Activated B cell treated with CpG ODN at 0.5 μM for 24 hours (primary cell): ENCODE measurements at regions of chr9 and their contacts with region 1.

Region 1: GRCh38 chr9:2144619-2145018 is 129.5 kb downstream of the SMARCA2 start:
- DNase-seq: no peak
- ATAC-seq: no peak
- H3K4me3 Mint-ChIP-seq: no peak overlapping the region
- H3K27ac Mint-ChIP-seq: no peak overlapping the region
- H3K4me1 Mint-ChIP-seq: peaks cover 18% of the 10 kb centered on the region
- H3K27me3 Mint-ChIP-seq: no peaks in the 10 kb centered on the region
- CTCF ChIP-seq: no peak

Region 2: GRCh38 chr9:2181792-2182191 is 37.2 kb after region 1 on chr9:
- CTCF ChIA-PET with region 1: interaction called, 9 read pairs
- POLR2A ChIA-PET with region 1: no interaction called
- intact Hi-C with region 1: loop called (anchors 5 kb)
- DNase-seq: no peak
- ATAC-seq: no peak
- H3K4me3 Mint-ChIP-seq: no peak overlapping the region
- H3K27ac Mint-ChIP-seq: no peak overlapping the region
- H3K4me1 Mint-ChIP-seq: no peaks in the 10 kb centered on the region
- H3K27me3 Mint-ChIP-seq: no peaks in the 10 kb centered on the region
- CTCF ChIP-seq: no peak